MCF 10A (cell line): ENCODE measurements at regions of chr2 and their contacts with region 1.

Region 1: GRCh38 chr2:23273786-23274185 is 111.2 kb upstream of the KLHL29 start:
- DNase-seq: peak; percentile 35
- H3K4me3 Mint-ChIP-seq: no peak overlapping the region
- H3K27ac Mint-ChIP-seq: no peak overlapping the region
- H3K4me1 Mint-ChIP-seq: no peaks in the 10 kb centered on the region
- H3K27me3 Mint-ChIP-seq: no peaks in the 10 kb centered on the region
- CTCF ChIP-seq: no peak

Region 2: DNA sequence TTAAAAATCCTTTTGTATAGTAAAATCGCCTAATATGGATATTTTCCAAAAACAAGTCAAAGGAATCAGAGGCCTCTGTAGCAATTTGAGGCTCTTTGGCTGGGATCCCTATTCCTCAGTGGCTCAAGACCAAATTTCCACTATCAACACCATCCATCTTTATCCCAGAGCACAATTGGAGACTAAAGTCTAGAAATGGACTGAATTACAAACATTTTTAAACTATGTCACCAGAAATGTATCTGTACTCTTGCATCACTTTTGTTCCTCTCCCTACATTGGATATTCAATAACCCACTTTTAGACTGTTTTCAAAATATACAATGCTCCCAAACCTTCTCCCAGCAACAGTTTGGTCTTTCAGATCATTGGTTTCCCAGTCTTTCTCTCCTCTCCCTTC is 29.2 kb before region 1 on chr2:
- CTCF ChIA-PET with region 1: no interaction called
- POLR2A ChIA-PET with region 1: no interaction called
- intact Hi-C with region 1: loop called (anchors 1 kb)
- DNase-seq: no peak
- H3K4me3 Mint-ChIP-seq: no peak overlapping the region
- H3K27ac Mint-ChIP-seq: no peak overlapping the region
- H3K4me1 Mint-ChIP-seq: no peaks in the 10 kb centered on the region
- H3K27me3 Mint-ChIP-seq: no peaks in the 10 kb centered on the region
- CTCF ChIP-seq: no peak